ENCODE measurements at regions of chr17 and their contacts with region 1.

Region 1: GRCh38 chr17:19867064-19867313 is 747 bp downstream of the ULK2 start:
- DNase-seq: peak; percentile 64
- H3K4me3 ChIP-seq: peak overlapping the region; percentile 78 to 82
- H3K27ac ChIP-seq: peak overlapping the region; percentile 83 to 86
- H3K4me1 ChIP-seq: no peaks in the 10 kb centered on the region
- H3K27me3 ChIP-seq: no peaks in the 10 kb centered on the region
- CTCF ChIP-seq: peak in 2 of 4 experiments; percentile 38 to 41
- POLR2A ChIP-seq: peak; percentile 20

Region 2: GRCh38 chr17:19977311-19978208 is 110.6 kb after region 1 on chr17 and contains the start of gene AKAP10:
- intact Hi-C with region 1: loop called (anchors 2 kb)
- DNase-seq: peak; percentile 89
- H3K4me3 ChIP-seq: peak within 1 kb of the TSS; percentile 94 to 99
- H3K27ac ChIP-seq: peak within 1 kb of the TSS; percentile 87 to 94
- H3K4me1 ChIP-seq: no peaks in the 10 kb centered on the region
- H3K27me3 ChIP-seq: no peaks in the 10 kb centered on the region
- CTCF ChIP-seq: no peak
- POLR2A ChIP-seq: peak; percentile 45
- total RNA-seq, gene AKAP10: 26.8 to 31.7 TPM

Region 3: GRCh38 chr17:20009302-20010098 is 142.5 kb after region 1 on chr17 and contains the start of gene SPECC1:
- intact Hi-C with region 1: loop called (anchors 10 kb)
- DNase-seq: peak; percentile 63
- H3K4me3 ChIP-seq: peak within 1 kb of the TSS; percentile 46 to 47
- H3K27ac ChIP-seq: peak within 1 kb of the TSS; percentile 45 to 63
- H3K4me1 ChIP-seq: peaks cover 3% of the 10 kb centered on the region
- H3K27me3 ChIP-seq: no peaks in the 10 kb centered on the region
- CTCF ChIP-seq: peak; percentile 91 to 97 (median 94)
- POLR2A ChIP-seq: no peak
- total RNA-seq, gene SPECC1: 29.7 to 85.5 TPM